ENCODE measurements at regions of chr22 and their contacts with region 1.

Region 1: GRCh38 chr22:29541845-29542244 is 11.7 kb downstream of the THOC5 start:
- DNase-seq: no peak
- H3K4me3 ChIP-seq: no peak overlapping the region
- H3K27ac ChIP-seq: no peak overlapping the region
- H3K4me1 ChIP-seq: no peaks in the 10 kb centered on the region
- H3K27me3 ChIP-seq: no peaks in the 10 kb centered on the region
- CTCF ChIP-seq: no peak

Region 2: GRCh38 chr22:29553351-29554224 is 11.7 kb after region 1 on chr22 and contains the start of gene THOC5:
- CTCF ChIA-PET with region 1: no interaction called
- POLR2A ChIA-PET with region 1: interaction called, 12 read pairs
- intact Hi-C with region 1: no loop called
- DNase-seq: peak; percentile 89
- H3K4me3 ChIP-seq: peak within 1 kb of the TSS; percentile 70
- H3K27ac ChIP-seq: peak within 1 kb of the TSS; percentile 68
- H3K4me1 ChIP-seq: peaks cover 14% of the 10 kb centered on the region
- H3K27me3 ChIP-seq: no peaks in the 10 kb centered on the region
- CTCF ChIP-seq: peak; percentile 65
- total RNA-seq, gene THOC5: 42.3 and 50.2 TPM in 2 replicates

Region 3: DNA sequence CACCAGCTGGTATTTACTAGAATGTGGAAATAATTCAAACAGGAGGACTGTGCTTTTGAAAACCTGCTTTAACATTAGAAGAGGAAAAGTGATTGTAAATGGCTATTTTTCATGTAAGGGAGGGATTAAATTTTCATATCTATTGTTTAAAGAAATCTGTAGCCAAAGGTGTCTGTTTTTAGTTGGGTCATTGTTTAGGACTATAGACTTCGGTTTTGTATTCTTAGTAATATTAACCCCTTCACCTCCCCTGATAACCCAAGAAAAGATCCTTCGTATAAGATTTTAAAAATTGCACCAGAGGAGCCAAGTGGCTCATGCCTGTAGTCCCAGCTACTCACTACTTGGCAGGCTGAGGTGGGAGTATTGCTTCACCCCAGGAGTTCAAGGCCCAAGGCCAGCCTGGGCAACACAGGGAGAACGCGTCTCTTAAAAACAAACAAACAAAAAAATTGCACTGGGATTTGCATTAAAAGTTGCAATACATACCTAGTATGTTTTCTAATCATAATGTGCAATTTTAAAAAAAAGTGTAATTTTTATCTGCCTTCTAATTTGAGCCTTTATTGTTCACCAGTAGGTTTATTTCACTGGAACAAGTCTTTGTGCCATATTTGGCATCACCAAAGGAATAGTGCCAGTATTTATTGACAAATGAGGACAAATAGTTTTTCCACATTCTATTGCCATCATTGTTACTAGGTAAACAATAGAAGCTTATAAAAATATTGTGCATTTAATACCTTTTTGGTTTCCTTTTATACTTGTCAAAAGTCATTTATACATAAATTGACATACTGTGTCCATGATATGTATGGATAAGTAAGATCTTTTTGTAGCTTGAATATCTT is 375.4 kb after region 1 on chr22:
- CTCF ChIA-PET with region 1: no interaction called
- POLR2A ChIA-PET with region 1: no interaction called
- intact Hi-C with region 1: no loop called
- DNase-seq: no peak
- H3K4me3 ChIP-seq: no peak overlapping the region
- H3K27ac ChIP-seq: no peak overlapping the region
- H3K4me1 ChIP-seq: peaks cover 21% of the 10 kb centered on the region
- H3K27me3 ChIP-seq: no peaks in the 10 kb centered on the region
- CTCF ChIP-seq: no peak